ENCODE measurements at regions of chr6 and their contacts with region 1.

Region 1: DNA sequence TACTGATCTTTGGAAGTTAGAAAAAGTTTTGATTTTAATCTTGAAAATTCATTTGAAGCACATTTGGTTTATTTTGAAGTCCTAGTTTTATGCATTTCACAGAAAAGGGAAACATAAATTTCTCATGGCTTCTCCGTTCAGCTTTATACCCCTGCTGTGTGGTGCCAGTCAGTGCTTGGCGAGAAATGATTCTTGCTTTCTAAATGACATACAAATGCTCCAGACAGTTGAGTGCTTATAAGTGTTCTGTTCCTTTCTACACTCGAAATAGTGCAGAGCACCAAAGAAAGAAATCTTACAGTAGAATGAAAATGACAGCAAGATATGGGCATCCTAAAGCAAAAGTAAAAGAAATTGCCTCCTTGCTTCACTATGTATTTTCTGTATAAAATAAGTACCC is 9.0 kb upstream of the ZNF292 start:
- DNase-seq: no peak
- ATAC-seq: no peak
- H3K4me3 ChIP-seq: no peak overlapping the region
- H3K27ac ChIP-seq: no peak overlapping the region
- H3K4me1 ChIP-seq: peaks cover 0 to 4% (median 0%) of the 10 kb centered on the region in 12 donors
- H3K27me3 ChIP-seq: no peaks in the 10 kb centered on the region
- CTCF ChIP-seq: no peak
- POLR2A ChIP-seq: no peak

Region 2: GRCh38 chr6:87220997-87221396 is 74.6 kb after region 1 on chr6:
- intact Hi-C with region 1: loop called in 2 of 10 experiments (anchors 5 to 10 kb)
- DNase-seq: no peak
- ATAC-seq: no peak
- H3K4me3 ChIP-seq: no peak overlapping the region
- H3K27ac ChIP-seq: no peak overlapping the region
- H3K4me1 ChIP-seq: peaks cover 0 to 7% (median 0%) of the 10 kb centered on the region in 12 donors
- H3K27me3 ChIP-seq: no peaks in the 10 kb centered on the region
- CTCF ChIP-seq: no peak
- POLR2A ChIP-seq: no peak

Region 3: GRCh38 chr6:87230801-87231200 is 84.4 kb after region 1 on chr6:
- intact Hi-C with region 1: loop called in 4 of 10 experiments (anchors 5 to 10 kb)
- DNase-seq: no peak
- ATAC-seq: no peak
- H3K4me3 ChIP-seq: no peak overlapping the region
- H3K27ac ChIP-seq: no peak overlapping the region
- H3K4me1 ChIP-seq: no peaks in the 10 kb centered on the region
- H3K27me3 ChIP-seq: no peaks in the 10 kb centered on the region
- CTCF ChIP-seq: no peak
- POLR2A ChIP-seq: no peak

Measured in heart left ventricle (tissue), 16 donors.